Calu3 (cell line): ENCODE measurements at regions of chr3 and their contacts with region 1.

Region 1: DNA sequence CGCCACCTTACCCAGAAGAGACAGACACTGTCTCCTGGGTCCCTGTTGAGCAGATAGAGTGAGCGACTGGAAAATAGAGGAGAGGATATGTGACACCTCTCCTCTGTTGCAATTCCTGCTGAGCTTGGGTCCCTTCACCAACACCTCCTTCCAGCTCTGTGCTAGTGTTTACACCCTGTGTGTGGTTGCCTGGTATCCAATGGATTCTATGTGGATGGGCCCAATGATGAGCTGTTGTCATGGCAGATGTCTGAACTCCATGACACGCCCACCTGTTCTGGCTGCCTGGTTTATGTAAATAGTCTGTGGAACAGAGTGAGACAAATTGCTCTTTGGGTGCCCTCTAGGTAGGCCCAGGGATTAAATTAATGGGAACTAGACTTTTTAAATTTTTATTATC is 23.7 kb downstream of the RBM5 start:
- DNase-seq: no peak
- H3K4me3 Mint-ChIP-seq: no peak overlapping the region
- H3K27ac Mint-ChIP-seq: no peak overlapping the region
- H3K4me1 Mint-ChIP-seq: no peaks in the 10 kb centered on the region
- H3K27me3 Mint-ChIP-seq: no peaks in the 10 kb centered on the region
- CTCF ChIP-seq: no peak

Region 2: GRCh38 chr3:49775538-49775937 is 336.9 kb before region 1 on chr3:
- CTCF ChIA-PET with region 1: interaction called, 10 read pairs
- intact Hi-C with region 1: no loop called
- DNase-seq: no peak
- H3K4me3 Mint-ChIP-seq: no peak overlapping the region
- H3K27ac Mint-ChIP-seq: no peak overlapping the region
- H3K4me1 Mint-ChIP-seq: no peaks in the 10 kb centered on the region
- H3K27me3 Mint-ChIP-seq: no peaks in the 10 kb centered on the region
- CTCF ChIP-seq: no peak

Region 3: DNA sequence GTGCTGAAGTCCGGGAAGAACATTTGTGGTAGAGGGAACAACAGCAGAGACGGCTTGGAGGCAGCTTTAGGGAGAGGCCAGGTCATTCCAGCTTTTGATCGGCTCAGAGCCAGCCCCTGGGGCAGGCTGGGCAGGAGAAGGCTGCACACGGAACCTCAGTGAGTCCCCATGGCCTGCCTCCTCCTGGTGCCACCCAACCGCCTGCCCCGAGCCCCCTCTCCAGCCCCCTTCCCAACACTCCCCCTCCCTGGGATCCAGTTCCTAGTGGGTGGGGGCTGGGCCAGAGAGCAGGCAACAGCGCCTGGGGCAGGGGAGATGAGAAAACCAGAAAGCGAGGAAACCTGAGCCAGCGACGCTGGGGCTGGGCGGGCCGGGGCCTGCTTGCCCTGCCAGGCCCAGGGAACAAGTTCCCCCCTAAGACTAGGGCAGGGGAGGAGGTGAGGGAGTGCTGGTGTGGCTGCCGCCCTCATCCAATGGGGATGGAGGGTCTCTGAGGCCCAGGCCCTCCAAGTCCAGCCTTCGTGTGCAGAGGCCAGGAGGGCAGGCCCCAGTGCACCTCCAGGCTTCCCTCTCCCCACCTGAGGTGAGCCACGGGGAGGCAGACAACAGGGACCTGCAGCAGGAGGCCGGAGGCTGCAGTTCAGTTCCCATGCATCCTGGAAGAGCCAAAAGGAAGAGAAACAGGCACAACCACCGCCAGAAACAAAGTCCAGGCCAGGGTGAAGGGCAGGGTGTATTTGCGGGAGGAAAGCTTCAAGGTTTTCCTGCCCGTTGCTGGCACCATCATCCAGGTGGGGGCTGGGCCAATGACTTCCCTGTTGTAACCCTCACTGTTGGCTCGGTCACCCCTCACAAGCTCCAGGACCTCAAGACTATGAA is 38.6 kb after region 1 on chr3:
- CTCF ChIA-PET with region 1: no interaction called
- intact Hi-C with region 1: no loop called
- DNase-seq: no peak
- H3K4me3 Mint-ChIP-seq: no peak overlapping the region
- H3K27ac Mint-ChIP-seq: no peak overlapping the region
- H3K4me1 Mint-ChIP-seq: peaks cover 11% of the 10 kb centered on the region
- H3K27me3 Mint-ChIP-seq: peaks cover 61% of the 10 kb centered on the region
- CTCF ChIP-seq: no peak